Posterior vena cava (tissue), 2 donors: ENCODE measurements at regions of chr10 and their contacts with region 1.

Region 1: GRCh38 chr10:100781145-100781665 is 35.8 kb downstream of the PAX2 start:
- DNase-seq: no peak

Region 2: DNA sequence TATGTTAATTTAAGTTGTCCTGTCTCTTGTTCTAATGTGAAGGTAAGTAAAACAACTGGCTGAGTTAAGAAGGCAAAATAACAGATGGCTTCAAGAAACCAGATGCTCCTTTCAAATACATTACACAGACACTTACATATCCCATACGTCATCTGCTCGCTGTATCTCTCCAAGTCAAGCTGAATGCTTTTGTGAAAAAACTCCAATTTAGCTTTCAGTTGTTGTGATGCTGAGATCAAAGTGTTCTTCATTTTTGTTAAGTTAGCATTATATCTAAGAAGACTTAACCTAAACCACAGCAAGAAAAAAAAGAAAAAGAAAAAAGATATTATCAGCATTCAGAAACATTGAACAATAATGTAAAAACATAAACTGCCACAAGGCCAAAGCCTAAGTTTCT is 576.8 kb before region 1 on chr10:
- intact Hi-C with region 1: loop called in 1 of 2 experiments (anchors 5 kb)
- DNase-seq: no peak

Region 3: GRCh38 chr10:102010961-102011360 is 1229.8 kb after region 1 on chr10:
- intact Hi-C with region 1: no loop called
- DNase-seq: no peak